GM18951 (cell line): ENCODE measurements at regions of chr1 and their contacts with region 1.

Region 1: GRCh38 chr1:247576495-247576894 is 11.7 kb upstream of the OR2G2 start:
- POLR2A ChIP-seq: no peak

Region 2: GRCh38 chr1:247390116-247390791 is 186.2 kb before region 1 on chr1:
- in situ Hi-C with region 1: loop called (anchors 25 kb)
- POLR2A ChIP-seq: no peak

Region 3: GRCh38 chr1:247487057-247487456 is 89.4 kb before region 1 on chr1:
- in situ Hi-C with region 1: no loop called
- POLR2A ChIP-seq: no peak

Region 4: DNA sequence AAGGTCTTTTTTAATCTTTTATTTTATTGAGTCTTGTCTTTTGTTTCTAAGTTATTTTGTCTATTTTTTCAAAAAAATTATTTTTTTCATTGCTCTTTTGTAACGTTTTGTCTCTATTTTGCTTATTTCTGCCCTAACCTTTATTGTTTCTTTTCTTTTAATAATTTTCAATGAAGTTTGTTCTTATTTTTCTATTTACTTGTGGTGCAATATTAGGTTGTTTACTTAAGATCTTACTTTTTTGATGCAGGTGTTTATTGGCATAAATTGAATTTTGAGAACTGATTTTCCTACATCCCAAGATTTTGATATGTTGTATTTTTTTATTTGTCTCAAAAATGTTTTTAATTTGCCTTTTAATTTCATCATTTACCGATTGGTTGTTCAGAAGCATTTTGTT is 108.7 kb after region 1 on chr1:
- in situ Hi-C with region 1: no loop called
- POLR2A ChIP-seq: no peak